Right ventricle myocardium inferior (tissue), 1 donor: ENCODE measurements at regions of chr2 and their contacts with region 1.

Region 1: GRCh38 chr2:16756831-16757644 is 91.4 kb upstream of the CYRIA start:
- DNase-seq: peak; percentile 91
- ATAC-seq: peak; percentile 87

Region 2: GRCh38 chr2:16553226-16553625 is 203.8 kb before region 1 on chr2:
- intact Hi-C with region 1: loop called (anchors 5 kb)
- DNase-seq: no peak
- ATAC-seq: no peak

Region 3: DNA sequence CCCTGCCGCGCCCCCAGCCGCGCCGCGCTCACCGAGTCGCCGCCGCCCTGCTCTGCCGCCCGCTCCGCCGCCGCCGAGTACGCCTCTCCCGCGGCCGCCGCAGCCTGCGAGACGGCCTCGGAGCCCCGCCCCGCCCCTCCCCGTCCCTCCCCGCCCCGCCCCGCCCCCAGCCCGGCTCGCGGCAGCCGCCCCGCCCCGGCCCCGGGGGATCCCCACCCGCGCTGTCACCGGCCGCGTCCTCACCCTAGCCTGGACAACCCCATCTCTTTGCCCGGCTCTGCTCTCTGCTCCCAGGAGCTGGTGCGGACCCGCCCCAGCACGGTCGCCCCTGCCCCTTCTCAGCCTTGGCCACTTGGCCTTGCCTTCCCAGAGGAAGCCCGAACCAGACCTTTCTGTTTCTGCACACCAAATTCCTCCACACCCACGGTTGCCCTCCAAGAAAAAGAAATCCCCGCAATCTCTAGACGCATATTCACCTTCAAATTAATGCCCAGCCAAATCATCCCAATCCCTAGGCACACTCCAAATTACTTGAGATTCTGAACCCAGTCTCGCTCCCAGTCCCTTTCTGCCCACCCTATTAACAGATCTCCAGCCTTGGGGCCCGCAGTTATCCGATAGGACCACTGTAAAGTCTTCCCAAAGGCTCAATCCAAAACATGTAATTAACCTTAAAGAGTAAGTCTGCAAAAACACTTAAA is 91.1 kb before region 1 on chr2 and contains the start of gene CYRIA:
- intact Hi-C with region 1: loop called (anchors 5 kb)
- DNase-seq: peak; percentile 86
- ATAC-seq: peak; percentile 83
- total RNA-seq, gene CYRIA: 5.1 TPM